AG04450 (cell line): ENCODE measurements at regions of chr14 and their contacts with region 1.

Region 1: GRCh38 chr14:71448431-71449252 is 483.6 kb upstream of the RGS6 start:
- DNase-seq: no peak
- H3K4me3 ChIP-seq: no peak overlapping the region
- H3K27ac ChIP-seq: no peak overlapping the region
- H3K27me3 ChIP-seq: no peaks in the 10 kb centered on the region
- CTCF ChIP-seq: no peak

Region 2: GRCh38 chr14:71271166-71271945 is 177.3 kb before region 1 on chr14:
- CTCF ChIA-PET with region 1: no interaction called
- POLR2A ChIA-PET with region 1: no interaction called
- DNase-seq: no peak
- H3K4me3 ChIP-seq: no peak overlapping the region
- H3K27ac ChIP-seq: no peak overlapping the region
- H3K27me3 ChIP-seq: no peaks in the 10 kb centered on the region
- CTCF ChIP-seq: no peak

Region 3: GRCh38 chr14:71430321-71431208 is 18.1 kb before region 1 on chr14:
- CTCF ChIA-PET with region 1: no interaction called
- POLR2A ChIA-PET with region 1: no interaction called
- DNase-seq: no peak
- H3K4me3 ChIP-seq: no peak overlapping the region
- H3K27ac ChIP-seq: no peak overlapping the region
- H3K27me3 ChIP-seq: no peaks in the 10 kb centered on the region
- CTCF ChIP-seq: no peak

Region 4: GRCh38 chr14:71460091-71460490 is 11.4 kb after region 1 on chr14:
- CTCF ChIA-PET with region 1: no interaction called
- POLR2A ChIA-PET with region 1: no interaction called
- DNase-seq: no peak
- H3K4me3 ChIP-seq: no peak overlapping the region
- H3K27ac ChIP-seq: no peak overlapping the region
- H3K27me3 ChIP-seq: no peaks in the 10 kb centered on the region
- CTCF ChIP-seq: no peak

Region 5: DNA sequence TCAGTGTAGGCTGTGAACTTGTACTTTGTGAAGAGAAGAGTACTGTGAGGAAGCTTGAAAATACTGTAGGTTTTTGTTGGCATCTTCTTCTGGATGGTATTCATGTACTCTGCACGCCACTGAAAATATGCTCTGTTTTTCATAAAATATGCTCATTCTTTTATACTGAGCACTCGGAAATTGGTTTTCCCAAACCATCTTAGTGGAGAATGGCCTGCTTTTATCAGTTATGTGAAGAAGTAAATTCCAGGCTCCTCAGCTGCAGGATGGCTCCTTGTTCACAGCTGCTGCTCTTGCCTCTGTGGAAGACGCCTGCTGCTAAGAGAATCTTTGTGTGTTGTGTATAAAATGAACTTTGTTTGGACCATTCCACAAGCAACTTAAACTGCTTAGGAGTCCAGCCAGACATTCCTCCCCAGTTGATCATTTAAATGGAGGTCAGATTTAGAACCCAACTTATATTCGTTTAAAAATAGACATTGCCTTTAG is 40.1 kb after region 1 on chr14:
- CTCF ChIA-PET with region 1: no interaction called
- POLR2A ChIA-PET with region 1: interaction called, 11 read pairs
- DNase-seq: peak; percentile 75
- H3K4me3 ChIP-seq: no peak overlapping the region
- H3K27ac ChIP-seq: no peak overlapping the region
- H3K27me3 ChIP-seq: no peaks in the 10 kb centered on the region
- CTCF ChIP-seq: no peak

Region 6: GRCh38 chr14:71610149-71610548 is 161.5 kb after region 1 on chr14:
- CTCF ChIA-PET with region 1: no interaction called
- POLR2A ChIA-PET with region 1: no interaction called
- DNase-seq: no peak
- H3K4me3 ChIP-seq: no peak overlapping the region
- H3K27ac ChIP-seq: no peak overlapping the region
- H3K27me3 ChIP-seq: no peaks in the 10 kb centered on the region
- CTCF ChIP-seq: no peak